Ascending aorta (tissue), 2 donors: ENCODE measurements at regions of chr12 and their contacts with region 1.

Region 1: GRCh38 chr12:120234643-120235368 is 30.7 kb downstream of the PXN start:
- DNase-seq: peak; percentile 86 to 95
- H3K4me3 ChIP-seq: peak overlapping the region in 1 of 2 donors; percentile 12
- H3K27ac ChIP-seq: peak overlapping the region; percentile 89 to 90
- H3K4me1 ChIP-seq: peaks cover 57 to 92% of the 10 kb centered on the region in 2 donors
- H3K27me3 ChIP-seq: no peaks in the 10 kb centered on the region
- CTCF ChIP-seq: peak in 2 of 3 experiments; percentile 38 to 52

Region 2: GRCh38 chr12:120194534-120195395 is 40.0 kb before region 1 on chr12 and contains the start of gene GCN1:
- intact Hi-C with region 1: no loop called
- DNase-seq: peak; percentile 16 to 90
- H3K4me3 ChIP-seq: peak within 1 kb of the TSS; percentile 72 to 82
- H3K27ac ChIP-seq: peak within 1 kb of the TSS; percentile 75 to 90
- H3K4me1 ChIP-seq: peaks cover 15 to 29% of the 10 kb centered on the region in 2 donors
- H3K27me3 ChIP-seq: no peaks in the 10 kb centered on the region
- CTCF ChIP-seq: no peak
- total RNA-seq, gene GCN1: 49.0 TPM

Region 3: DNA sequence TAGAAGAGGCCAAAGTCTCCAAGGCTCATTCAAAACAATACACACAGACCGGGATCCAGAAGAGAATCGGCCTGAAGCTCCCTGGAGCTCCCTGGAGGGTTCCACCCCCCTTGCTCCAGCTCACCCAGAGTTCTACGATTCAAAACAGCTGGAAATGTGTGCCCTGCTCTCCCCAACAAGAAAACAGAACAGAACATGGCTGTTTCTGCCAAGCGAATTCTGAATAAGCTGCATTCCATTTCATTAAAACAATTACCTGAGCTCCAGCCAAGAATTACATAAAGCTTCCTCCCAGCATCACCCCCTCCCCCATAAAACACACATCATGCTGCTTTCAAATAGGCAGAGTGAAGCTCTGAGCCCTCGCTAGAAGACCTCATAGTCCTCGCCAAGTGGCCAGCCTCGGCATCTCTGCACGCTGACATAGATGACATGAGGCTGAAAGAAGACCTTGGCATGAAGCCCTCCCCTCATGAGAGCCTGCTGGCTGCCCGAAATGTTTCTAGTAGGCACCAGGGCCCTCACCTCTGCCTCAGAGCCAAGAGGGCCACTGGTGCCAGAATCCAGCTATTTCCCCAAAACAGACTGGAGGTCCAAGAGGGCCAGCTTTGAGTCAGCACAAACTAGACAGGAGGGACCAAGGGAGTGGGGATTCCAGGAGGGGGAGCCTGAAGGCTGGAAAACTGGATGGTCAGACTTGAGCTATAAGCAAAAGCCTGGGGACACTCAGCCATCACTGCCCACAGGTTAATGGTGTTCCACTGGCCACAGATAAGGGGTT is 22.4 kb after region 1 on chr12:
- intact Hi-C with region 1: no loop called
- DNase-seq: peak in 1 of 2 donors; percentile 88
- H3K4me3 ChIP-seq: peak overlapping the region; percentile 0 to 42
- H3K27ac ChIP-seq: peak overlapping the region; percentile 89
- H3K4me1 ChIP-seq: peaks cover 25 to 47% of the 10 kb centered on the region in 2 donors
- H3K27me3 ChIP-seq: no peaks in the 10 kb centered on the region
- CTCF ChIP-seq: no peak

Region 4: DNA sequence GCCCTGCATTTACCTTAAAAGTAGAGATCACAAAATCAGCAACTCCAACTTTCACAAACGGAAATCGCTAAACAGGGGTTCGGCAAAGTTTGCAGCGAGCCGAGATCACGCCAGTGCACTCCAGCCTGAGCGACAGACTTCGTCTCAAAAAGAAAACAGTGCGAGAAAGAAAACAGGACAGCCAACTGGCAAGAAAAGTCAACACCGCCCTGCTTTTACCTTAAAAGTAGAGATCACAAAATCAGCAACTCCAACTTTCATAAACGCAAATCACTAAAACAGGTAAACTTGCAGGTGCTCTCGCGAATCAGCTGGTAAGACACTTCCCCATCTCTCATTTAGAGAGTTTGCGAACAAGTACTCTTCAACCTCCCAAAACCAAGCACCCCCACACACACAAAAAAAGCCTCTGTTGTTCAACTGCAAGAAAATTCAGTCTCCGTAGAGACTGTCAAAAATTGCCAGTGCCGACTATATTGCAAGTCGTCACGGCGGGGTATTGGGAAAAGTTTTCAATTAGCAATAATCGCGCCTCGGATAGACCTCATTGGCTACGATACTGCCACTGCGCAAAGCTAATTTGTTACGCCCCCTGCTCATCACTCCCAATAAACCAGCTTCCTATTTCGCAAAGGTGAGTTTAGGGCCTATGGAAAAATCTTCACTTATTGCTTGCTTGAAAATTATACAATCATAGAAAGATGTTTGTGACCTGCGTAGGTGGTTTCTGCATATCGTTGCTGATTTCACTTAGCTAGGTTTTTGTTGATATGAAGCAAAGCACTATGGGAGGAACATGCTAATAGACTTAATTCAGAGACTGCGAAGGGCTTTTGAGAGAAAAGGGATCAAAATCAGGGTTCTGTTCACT is 58.1 kb after region 1 on chr12 and contains the start of gene RNU4-1:
- intact Hi-C with region 1: loop called (anchors 1 kb)
- DNase-seq: peak in 1 of 2 donors; percentile 87
- H3K4me3 ChIP-seq: peak within 1 kb of the TSS; percentile 57 to 62
- H3K27ac ChIP-seq: peak within 1 kb of the TSS; percentile 92 to 97
- H3K4me1 ChIP-seq: peaks cover 0 to 7% of the 10 kb centered on the region in 2 donors
- H3K27me3 ChIP-seq: no peaks in the 10 kb centered on the region
- CTCF ChIP-seq: no peak
- total RNA-seq, gene RNU4-1: not detected

Region 5: GRCh38 chr12:120404271-120404670 is 169.5 kb after region 1 on chr12:
- intact Hi-C with region 1: no loop called
- DNase-seq: no peak
- H3K4me3 ChIP-seq: no peak overlapping the region
- H3K27ac ChIP-seq: no peak overlapping the region
- H3K4me1 ChIP-seq: no peaks in the 10 kb centered on the region
- H3K27me3 ChIP-seq: no peaks in the 10 kb centered on the region
- CTCF ChIP-seq: no peak

Region 6: GRCh38 chr12:120669055-120669840 is 434.4 kb after region 1 on chr12:
- intact Hi-C with region 1: no loop called
- DNase-seq: peak in 1 of 2 donors; percentile 73
- H3K4me3 ChIP-seq: peak overlapping the region in 1 of 2 donors; percentile 43
- H3K27ac ChIP-seq: peak overlapping the region; percentile 58 to 73
- H3K4me1 ChIP-seq: peaks cover 0 to 5% of the 10 kb centered on the region in 2 donors
- H3K27me3 ChIP-seq: no peaks in the 10 kb centered on the region
- CTCF ChIP-seq: no peak